ENCODE measurements at regions of chr2 and their contacts with region 1.

Region 1: GRCh38 chr2:172465417-172466334 is 38.3 kb downstream of the ITGA6 start:
- DNase-seq: peak; percentile 74
- H3K4me3 Mint-ChIP-seq: peak overlapping the region; percentile 62
- H3K27ac Mint-ChIP-seq: peak overlapping the region; percentile 96
- H3K4me1 Mint-ChIP-seq: peaks cover 55% of the 10 kb centered on the region
- H3K27me3 Mint-ChIP-seq: no peaks in the 10 kb centered on the region
- CTCF ChIP-seq: peak; percentile 74

Region 2: DNA sequence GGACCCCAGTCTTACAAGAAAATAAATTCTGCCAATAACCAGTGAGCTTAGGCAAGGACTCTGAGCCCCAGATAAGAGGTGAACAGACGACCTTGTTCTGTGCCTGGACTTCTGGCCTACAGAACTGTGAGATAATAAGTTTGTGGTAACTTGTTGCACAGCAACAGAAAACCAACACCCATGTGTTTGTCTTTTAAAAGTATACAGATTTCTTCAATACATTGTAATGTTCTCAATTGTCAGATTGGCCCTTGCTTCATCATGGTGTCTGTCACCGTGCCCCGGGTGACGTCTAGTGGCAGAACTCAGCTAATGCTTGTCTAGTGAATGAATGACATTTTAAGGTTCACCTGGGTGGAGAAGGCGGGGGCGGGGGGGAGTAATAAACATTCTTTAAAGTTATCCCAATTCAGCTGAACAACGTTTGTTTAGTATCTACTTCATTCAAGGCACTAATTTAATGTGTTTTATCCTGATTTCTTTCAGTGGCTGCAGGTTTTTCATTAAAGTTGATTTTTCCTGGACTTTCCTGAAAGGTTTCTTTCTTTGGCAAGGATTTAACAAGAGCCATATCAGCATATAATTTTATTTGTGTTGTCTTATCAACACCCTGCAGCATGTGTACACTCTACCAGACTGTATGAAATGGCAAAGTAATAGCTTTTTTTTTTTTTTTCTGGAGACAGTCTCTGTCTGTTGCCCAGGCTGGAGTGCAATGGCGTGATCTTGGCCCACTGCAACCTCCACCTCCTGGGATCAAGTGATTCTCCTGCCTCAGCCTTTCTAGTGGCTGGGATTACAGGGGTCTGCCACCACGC is 239.2 kb before region 1 on chr2:
- CTCF ChIA-PET with region 1: interaction called, 23 read pairs
- intact Hi-C with region 1: loop called (anchors 1 kb)
- DNase-seq: peak; percentile 68
- H3K4me3 Mint-ChIP-seq: no peak overlapping the region
- H3K27ac Mint-ChIP-seq: no peak overlapping the region
- H3K4me1 Mint-ChIP-seq: peaks cover 31% of the 10 kb centered on the region
- H3K27me3 Mint-ChIP-seq: no peaks in the 10 kb centered on the region
- CTCF ChIP-seq: peak; percentile 39

Region 3: DNA sequence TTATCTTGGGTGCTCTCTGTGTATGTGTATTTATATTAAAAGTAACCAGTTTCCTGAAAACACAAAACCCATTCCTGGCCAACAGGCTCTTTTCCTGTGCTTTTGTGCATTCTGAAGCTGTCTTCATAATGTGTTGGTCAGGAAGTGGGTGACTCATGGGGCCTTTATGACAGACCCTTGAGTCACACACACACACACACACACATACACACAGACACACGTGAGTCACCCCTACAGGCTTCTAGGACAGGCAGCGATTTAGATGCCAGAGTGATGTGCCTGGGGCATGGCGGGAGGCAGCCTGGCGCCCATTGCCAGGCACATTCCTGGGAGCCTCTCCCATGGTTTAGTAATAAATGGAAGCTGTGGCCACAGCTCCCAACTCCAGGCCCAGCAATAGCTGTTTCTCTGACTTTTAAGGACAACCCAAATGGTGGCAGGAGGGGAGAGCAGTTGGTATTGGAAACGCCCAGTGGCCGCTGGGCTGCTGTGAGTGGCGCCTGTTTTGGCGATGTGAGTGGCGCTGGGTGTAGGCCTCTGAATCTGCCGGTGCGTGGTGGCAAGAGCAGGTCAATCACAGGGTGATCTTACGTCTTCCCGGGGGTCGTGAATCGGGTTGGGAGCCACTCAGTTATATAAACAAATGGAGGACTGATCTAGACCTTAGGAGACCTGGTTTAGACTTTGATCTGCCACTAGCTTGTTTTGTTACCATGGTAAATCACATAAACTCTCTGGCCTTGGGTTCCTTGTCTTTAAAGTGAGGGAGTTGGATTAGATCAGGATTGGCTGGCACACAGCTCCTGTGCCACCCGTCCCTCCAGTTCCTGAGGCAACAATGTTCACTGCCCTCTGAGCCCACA is 212.3 kb before region 1 on chr2:
- CTCF ChIA-PET with region 1: interaction called, 5 read pairs
- intact Hi-C with region 1: loop called (anchors 5 kb)
- DNase-seq: peak; percentile 81
- H3K4me3 Mint-ChIP-seq: peak overlapping the region; percentile 22
- H3K27ac Mint-ChIP-seq: peak overlapping the region; percentile 52
- H3K4me1 Mint-ChIP-seq: peaks cover 56% of the 10 kb centered on the region
- H3K27me3 Mint-ChIP-seq: no peaks in the 10 kb centered on the region
- CTCF ChIP-seq: no peak

Region 4: GRCh38 chr2:172427256-172427989 is 38.3 kb before region 1 on chr2 and contains the start of gene ITGA6:
- CTCF ChIA-PET with region 1: interaction called, 84 read pairs
- intact Hi-C with region 1: loop called (anchors 1 kb)
- DNase-seq: peak; percentile 94
- H3K4me3 Mint-ChIP-seq: peak within 1 kb of the TSS; percentile 95
- H3K27ac Mint-ChIP-seq: peak within 1 kb of the TSS; percentile 89
- H3K4me1 Mint-ChIP-seq: peaks cover 24% of the 10 kb centered on the region
- H3K27me3 Mint-ChIP-seq: no peaks in the 10 kb centered on the region
- CTCF ChIP-seq: no peak
- total RNA-seq, gene ITGA6: 242 and 270 TPM in 2 replicates

Region 5: GRCh38 chr2:172735582-172736423 is 270.1 kb after region 1 on chr2 and contains the start of gene RAPGEF4:
- CTCF ChIA-PET with region 1: no interaction called
- intact Hi-C with region 1: no loop called
- DNase-seq: peak; percentile 9
- H3K4me3 Mint-ChIP-seq: peak within 1 kb of the TSS; percentile 60
- H3K27ac Mint-ChIP-seq: peak within 1 kb of the TSS; percentile 36
- H3K4me1 Mint-ChIP-seq: no peaks in the 10 kb centered on the region
- H3K27me3 Mint-ChIP-seq: peaks cover 76% of the 10 kb centered on the region
- CTCF ChIP-seq: no peak
- total RNA-seq, gene RAPGEF4: 0.37 and 1.8 TPM in 2 replicates